Activated CD8-positive, alpha-beta T cell treated with anti-CD3 and anti-CD28 coated beads, Interleukin-2, amount 10 ng/mL, durations not matched to agents 7 days and 5 days (primary cell): ENCODE measurements at regions of chr5 and their contacts with region 1.

Region 1: DNA sequence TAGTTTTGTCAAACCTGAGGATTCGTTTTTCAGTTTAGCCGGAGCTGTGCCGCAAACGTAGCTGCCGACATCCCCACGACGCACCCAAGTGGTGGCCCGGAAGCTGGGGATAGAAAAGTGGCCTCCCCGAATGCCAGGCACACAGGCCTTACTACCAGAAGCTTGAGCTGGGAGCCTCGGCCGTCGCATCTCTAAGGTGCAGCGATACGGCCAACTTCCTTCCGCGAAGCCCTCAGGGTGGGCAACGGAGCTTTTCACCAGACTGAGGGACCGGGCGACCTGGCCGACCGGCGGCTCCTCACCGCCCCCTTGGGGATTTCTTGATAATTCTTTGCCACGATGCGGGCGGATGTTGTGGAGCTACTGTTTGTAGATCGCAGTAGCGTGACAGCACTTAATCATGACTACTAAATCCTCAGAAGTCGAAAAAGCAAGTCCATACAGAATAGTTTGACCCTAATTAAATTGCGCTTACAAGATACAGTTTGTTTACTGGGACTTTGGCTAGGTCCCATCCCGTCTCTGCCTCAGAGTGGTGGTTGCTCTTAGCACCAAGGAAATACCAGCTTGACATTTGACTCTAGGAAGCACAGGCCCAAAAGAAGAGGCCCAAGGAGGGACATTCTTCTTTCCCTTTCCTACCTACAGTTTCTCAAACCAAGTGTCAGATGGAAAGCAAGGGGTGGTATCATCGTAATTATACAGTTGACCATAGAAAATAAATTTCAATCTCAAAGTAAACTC is 613 bp upstream of the TMEM267 start:
- DNase-seq: peak; percentile 94
- ATAC-seq: peak; percentile 72
- H3K4me3 Mint-ChIP-seq: peak overlapping the region; percentile 97
- H3K27ac Mint-ChIP-seq: peak overlapping the region; percentile 100
- H3K4me1 Mint-ChIP-seq: peaks cover 38% of the 10 kb centered on the region
- H3K27me3 Mint-ChIP-seq: no peaks in the 10 kb centered on the region

Region 2: GRCh38 chr5:43008369-43009153 is 475.7 kb before region 1 on chr5:
- CTCF ChIA-PET with region 1: no interaction called
- POLR2A ChIA-PET with region 1: interaction called, 10 read pairs
- DNase-seq: peak; percentile 94
- ATAC-seq: peak; percentile 71
- H3K4me3 Mint-ChIP-seq: peak overlapping the region; percentile 90
- H3K27ac Mint-ChIP-seq: peak overlapping the region; percentile 98
- H3K4me1 Mint-ChIP-seq: peaks cover 44% of the 10 kb centered on the region
- H3K27me3 Mint-ChIP-seq: peaks cover 1% of the 10 kb centered on the region

Region 3: DNA sequence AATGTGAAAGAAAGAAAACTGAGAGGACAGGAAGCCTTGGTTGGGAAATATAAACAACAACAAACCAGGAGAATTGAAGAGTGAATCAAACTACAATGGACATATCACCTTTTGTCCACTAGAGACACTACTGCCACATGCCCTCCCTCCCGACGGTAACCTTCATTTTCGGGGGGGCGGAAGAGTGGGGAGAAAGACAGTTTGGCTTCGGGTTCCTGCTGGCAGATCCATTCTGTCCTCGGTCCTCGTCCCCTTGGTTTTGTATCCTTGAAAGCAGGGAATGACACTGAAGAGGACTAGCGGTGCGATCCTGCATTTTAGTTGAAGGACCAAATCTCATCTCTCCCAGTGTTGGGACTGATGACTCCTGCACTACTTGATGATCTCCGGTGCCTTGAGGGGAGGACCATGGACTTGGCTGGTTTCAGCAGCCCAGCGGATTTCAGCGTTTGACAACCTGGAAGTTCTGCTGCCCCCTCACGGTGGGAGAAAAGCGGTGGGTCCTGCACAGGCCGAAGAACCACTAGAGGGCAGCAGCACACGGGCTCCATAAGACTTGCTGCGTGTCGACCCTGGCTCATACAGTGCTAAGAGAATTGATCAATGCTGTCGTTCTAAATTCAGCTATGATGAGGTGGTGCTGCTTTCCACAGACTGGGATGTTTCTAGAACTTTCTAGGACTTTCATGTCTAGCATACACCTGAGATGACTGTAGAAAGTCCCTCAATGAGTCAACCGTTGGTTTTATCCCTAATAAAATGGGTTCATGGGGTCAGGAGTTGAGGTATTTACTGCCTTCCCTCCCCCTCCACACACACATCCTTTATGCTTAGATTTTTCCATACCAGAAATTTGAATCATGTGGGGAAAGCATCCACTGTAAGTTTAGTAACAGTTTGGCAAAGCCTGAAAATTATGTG is 378.6 kb before region 1 on chr5:
- CTCF ChIA-PET with region 1: interaction called, 10 read pairs
- POLR2A ChIA-PET with region 1: interaction called, 10 read pairs
- DNase-seq: peak; percentile 93
- ATAC-seq: peak; percentile 98
- H3K4me3 Mint-ChIP-seq: peak overlapping the region; percentile 74
- H3K27ac Mint-ChIP-seq: peak overlapping the region; percentile 87
- H3K4me1 Mint-ChIP-seq: peaks cover 45% of the 10 kb centered on the region
- H3K27me3 Mint-ChIP-seq: no peaks in the 10 kb centered on the region

Region 4: GRCh38 chr5:43305948-43306565 is 178.2 kb before region 1 on chr5:
- CTCF ChIA-PET with region 1: interaction called, 30 read pairs
- POLR2A ChIA-PET with region 1: interaction called, 4 read pairs
- DNase-seq: no peak
- ATAC-seq: peak; percentile 34
- H3K4me3 Mint-ChIP-seq: no peak overlapping the region
- H3K27ac Mint-ChIP-seq: peak overlapping the region; percentile 39
- H3K4me1 Mint-ChIP-seq: peaks cover 80% of the 10 kb centered on the region
- H3K27me3 Mint-ChIP-seq: no peaks in the 10 kb centered on the region

Region 5: DNA sequence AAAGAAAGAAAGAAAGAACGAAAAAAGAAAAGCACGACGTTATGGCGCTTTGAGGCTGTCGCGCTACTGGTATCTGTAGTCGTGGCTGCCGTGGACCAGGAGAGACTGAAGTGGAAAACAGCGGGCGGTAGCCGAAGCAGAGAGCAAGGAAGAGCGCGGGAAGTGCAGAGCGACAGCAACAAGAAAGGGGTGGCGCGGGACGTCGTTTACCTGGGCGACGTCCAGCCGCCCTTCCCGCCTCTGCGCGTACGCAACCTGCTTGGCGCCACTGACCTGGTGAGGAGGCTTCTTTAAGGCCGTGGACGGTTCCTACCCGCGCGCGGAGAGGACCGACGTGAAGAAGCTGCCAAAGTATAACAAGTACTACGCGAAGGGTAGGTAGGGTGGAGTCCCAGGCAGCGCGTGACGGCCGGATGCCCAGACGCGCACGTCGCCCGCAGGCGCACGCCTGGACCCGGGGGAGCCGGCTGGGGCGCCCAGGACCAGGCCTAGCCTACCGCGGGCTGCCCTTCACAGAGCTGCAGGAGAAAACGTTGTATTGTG is 87.4 kb before region 1 on chr5:
- CTCF ChIA-PET with region 1: interaction called, 16 read pairs
- POLR2A ChIA-PET with region 1: interaction called, 47 read pairs
- DNase-seq: peak; percentile 78
- ATAC-seq: peak; percentile 99
- H3K4me3 Mint-ChIP-seq: peak overlapping the region; percentile 98
- H3K27ac Mint-ChIP-seq: peak overlapping the region; percentile 99
- H3K4me1 Mint-ChIP-seq: peaks cover 24% of the 10 kb centered on the region
- H3K27me3 Mint-ChIP-seq: no peaks in the 10 kb centered on the region

Region 6: DNA sequence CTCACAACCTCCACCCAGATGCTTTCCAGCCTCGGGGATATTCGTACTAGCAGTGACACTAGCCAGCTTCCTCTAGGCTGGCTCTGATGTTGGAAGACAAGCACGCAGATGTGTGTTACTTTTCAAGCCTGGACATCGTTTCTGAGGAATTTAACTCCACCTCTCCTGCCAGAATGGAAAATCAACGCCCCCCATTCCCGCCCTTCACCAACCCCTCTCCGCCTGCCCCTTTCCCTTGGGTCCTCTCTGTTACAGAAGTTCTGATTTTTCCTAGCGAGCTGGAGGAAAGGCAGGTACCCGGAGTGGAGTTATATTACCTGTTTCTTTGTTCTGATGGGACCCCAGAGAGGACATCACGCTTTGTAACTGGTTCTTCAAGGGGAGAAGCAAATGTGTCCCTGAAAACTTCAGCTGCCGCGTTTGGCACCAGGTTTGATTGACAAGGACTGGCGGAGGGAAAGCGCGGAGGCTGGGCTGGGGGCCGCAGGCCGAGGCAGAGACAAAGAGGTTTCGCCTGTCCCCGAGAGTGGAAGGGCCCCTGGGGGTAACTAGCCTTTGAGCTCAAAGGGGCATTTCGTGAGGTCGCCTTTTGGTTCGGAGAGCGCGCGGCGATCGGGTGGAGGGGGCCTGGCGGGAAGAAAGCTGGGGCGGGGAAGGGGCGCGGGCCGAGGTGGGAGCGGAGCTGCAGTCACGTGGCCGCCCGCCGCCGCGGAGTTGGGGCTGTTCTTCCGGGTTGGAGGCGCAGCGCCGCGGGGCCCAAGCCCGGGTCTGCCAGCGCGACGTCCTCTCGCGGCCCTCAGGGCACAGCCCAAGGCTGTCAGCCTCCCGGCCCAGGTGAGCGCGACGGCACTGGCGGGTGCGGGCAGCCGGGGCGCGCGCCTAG is 118.4 kb after region 1 on chr5 and contains the start of gene NNT:
- CTCF ChIA-PET with region 1: interaction called, 8 read pairs
- POLR2A ChIA-PET with region 1: interaction called, 37 read pairs
- DNase-seq: peak; percentile 84
- ATAC-seq: peak; percentile 92
- H3K4me3 Mint-ChIP-seq: peak within 1 kb of the TSS; percentile 92
- H3K27ac Mint-ChIP-seq: peak within 1 kb of the TSS; percentile 90
- H3K4me1 Mint-ChIP-seq: peaks cover 51% of the 10 kb centered on the region
- H3K27me3 Mint-ChIP-seq: no peaks in the 10 kb centered on the region
- total RNA-seq, gene NNT: 103 to 104 TPM